IMR-90 (cell line): ENCODE measurements at regions of chr17 and their contacts with region 1.

Region 1: GRCh38 chr17:76264755-76265596 is at the start of gene UBALD2:
- DNase-seq: peak; percentile 100
- ATAC-seq: peak; percentile 95
- H3K4me3 ChIP-seq: peak within 1 kb of the TSS; percentile 100
- H3K27ac ChIP-seq: peak within 1 kb of the TSS; percentile 59
- H3K4me1 ChIP-seq: peaks cover 10% of the 10 kb centered on the region
- H3K27me3 ChIP-seq: no peaks in the 10 kb centered on the region
- CTCF ChIP-seq: no peak
- POLR2A ChIP-seq: peak; percentile 87
- RAD21 ChIP-seq: no peak
- total RNA-seq, gene UBALD2: 0.90 and 1.4 TPM in 2 replicates

Region 2: GRCh38 chr17:76107509-76107908 is 157.5 kb before region 1 on chr17:
- CTCF ChIA-PET with region 1: no interaction called
- POLR2A ChIA-PET with region 1: no interaction called
- dilution Hi-C with region 1: no loop called
- in situ Hi-C with region 1: no loop called
- intact Hi-C with region 1: no loop called
- DNase-seq: no peak
- ATAC-seq: no peak
- H3K4me3 ChIP-seq: no peak overlapping the region
- H3K27ac ChIP-seq: no peak overlapping the region
- H3K4me1 ChIP-seq: peaks cover 5% of the 10 kb centered on the region; the same call in 1 of the 2 replicates
- H3K27me3 ChIP-seq: no peaks in the 10 kb centered on the region
- CTCF ChIP-seq: no peak
- POLR2A ChIP-seq: no peak
- RAD21 ChIP-seq: no peak

Region 3: GRCh38 chr17:76139801-76140660 is 124.9 kb before region 1 on chr17:
- CTCF ChIA-PET with region 1: no interaction called
- POLR2A ChIA-PET with region 1: no interaction called
- dilution Hi-C with region 1: no loop called
- in situ Hi-C with region 1: no loop called
- intact Hi-C with region 1: loop called (anchors 5 kb)
- DNase-seq: no peak
- ATAC-seq: no peak
- H3K4me3 ChIP-seq: no peak overlapping the region
- H3K27ac ChIP-seq: no peak overlapping the region
- H3K4me1 ChIP-seq: no peaks in the 10 kb centered on the region; the same call in 1 of the 2 replicates
- H3K27me3 ChIP-seq: peaks cover 75% of the 10 kb centered on the region
- CTCF ChIP-seq: no peak
- POLR2A ChIP-seq: no peak
- RAD21 ChIP-seq: no peak

Region 4: GRCh38 chr17:76240461-76241203 is 24.3 kb before region 1 on chr17 and contains the start of gene RNF157:
- CTCF ChIA-PET with region 1: no interaction called
- POLR2A ChIA-PET with region 1: no interaction called
- dilution Hi-C with region 1: no loop called
- in situ Hi-C with region 1: no loop called
- intact Hi-C with region 1: loop called (anchors 2 kb)
- DNase-seq: peak; percentile 48
- ATAC-seq: peak; percentile 96
- H3K4me3 ChIP-seq: peak within 1 kb of the TSS; percentile 63
- H3K27ac ChIP-seq: peak within 1 kb of the TSS; percentile 15; the same call in 1 of the 2 replicates
- H3K4me1 ChIP-seq: peaks cover 3% of the 10 kb centered on the region; the same call in 1 of the 2 replicates
- H3K27me3 ChIP-seq: peaks cover 19% of the 10 kb centered on the region
- CTCF ChIP-seq: no peak
- POLR2A ChIP-seq: no peak
- RAD21 ChIP-seq: no peak
- total RNA-seq, gene RNF157: 0.54 and 0.83 TPM in 2 replicates